ENCODE measurements at regions of chr1 and their contacts with region 1.

Region 1: DNA sequence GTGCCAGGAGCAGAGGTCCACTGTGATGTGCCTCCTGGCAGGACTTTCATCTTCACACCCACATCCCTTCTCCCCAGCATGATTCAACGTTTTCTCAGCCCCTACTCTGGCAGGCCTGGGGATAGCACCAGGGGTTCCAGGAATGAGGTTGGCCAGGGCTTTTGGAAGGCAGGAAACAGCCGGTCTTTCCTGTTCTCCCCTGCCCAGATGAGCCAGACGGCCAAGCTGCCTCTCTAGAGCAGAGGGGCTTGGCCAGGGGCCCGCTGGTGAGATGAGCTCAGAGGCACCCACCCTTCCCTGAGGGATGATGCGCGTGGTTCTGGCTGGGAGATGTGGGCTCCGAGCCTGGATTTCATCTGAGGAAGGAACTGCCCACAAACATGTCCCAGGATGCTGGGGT is 4.3 kb upstream of the MFAP2 start:
- DNase-seq: peak in 1 of 2 experiments; percentile 39
- H3K4me3 ChIP-seq: no peak overlapping the region
- H3K27ac ChIP-seq: no peak overlapping the region
- H3K4me1 ChIP-seq: peaks cover 0 to 9% (median 4%) of the 10 kb centered on the region in 4 experiments; a peak in 5 of 7 replicates
- H3K27me3 ChIP-seq: peaks cover 0 to 3% (median 0%) of the 10 kb centered on the region in 4 experiments; a peak in 1 of 7 replicates
- CTCF ChIP-seq: no peak
- EP300 ChIP-seq: no peak
- POLR2A ChIP-seq: no peak
- RAD21 ChIP-seq: no peak

Region 2: DNA sequence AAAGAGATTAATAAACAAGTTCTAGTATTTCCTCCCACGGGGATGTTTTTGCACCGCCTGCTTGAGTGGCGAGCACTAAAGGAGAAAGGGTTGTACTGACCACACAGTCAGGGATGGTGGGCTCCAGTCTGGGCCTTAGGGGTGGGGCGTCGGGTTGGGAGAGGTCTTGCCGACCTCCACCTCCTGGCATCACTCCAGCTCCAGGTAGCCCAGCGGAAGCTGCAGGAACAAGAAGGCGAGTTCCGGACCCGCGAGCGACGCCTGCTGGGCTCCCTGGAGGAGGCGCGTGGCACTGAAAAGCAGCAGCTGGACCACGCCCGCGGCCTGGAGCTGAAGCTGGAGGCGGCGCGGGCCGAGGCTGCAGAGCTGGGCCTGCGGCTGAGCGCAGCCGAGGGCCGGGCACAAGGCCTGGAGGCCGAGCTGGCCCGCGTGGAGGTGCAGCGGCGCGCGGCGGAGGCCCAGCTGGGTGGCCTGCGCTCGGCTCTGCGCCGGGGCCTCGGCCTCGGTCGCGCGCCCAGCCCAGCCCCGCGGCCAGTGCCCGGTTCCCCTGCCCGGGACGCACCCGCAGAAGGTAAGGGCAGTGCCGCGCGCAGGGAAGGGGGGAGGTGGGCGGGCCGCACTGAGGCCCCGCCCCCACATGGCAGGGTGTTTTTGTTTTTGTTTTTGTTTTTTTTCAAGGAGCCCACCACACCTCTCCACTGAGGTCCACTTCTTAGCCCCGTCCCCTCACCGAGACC is 24.0 kb before region 1 on chr1:
- CTCF ChIA-PET with region 1: interaction called, 267 read pairs
- POLR2A ChIA-PET with region 1: interaction called, 92 read pairs
- DNase-seq: peak; percentile 84 to 97
- H3K4me3 ChIP-seq: peak overlapping the region; percentile 5 to 46 (median 23); a peak in 7 of 8 replicates
- H3K27ac ChIP-seq: no peak overlapping the region
- H3K4me1 ChIP-seq: no peaks in the 10 kb centered on the region
- H3K27me3 ChIP-seq: no peaks in the 10 kb centered on the region
- CTCF ChIP-seq: peak; percentile 80 to 87 (median 84)
- EP300 ChIP-seq: 0 out of 3 replicates have a peak, but pooled peaks of 1 of the 2 experiments have one; percentile 25
- POLR2A ChIP-seq: peak in 1 of 2 experiments; percentile 66; a peak in 2 of 3 replicates
- RAD21 ChIP-seq: peak; percentile 47 to 53

Region 3: GRCh38 chr1:17004466-17005364 is 20.0 kb after region 1 on chr1:
- CTCF ChIA-PET with region 1: interaction called, 164 read pairs
- POLR2A ChIA-PET with region 1: interaction called, 18 read pairs
- DNase-seq: no peak
- H3K4me3 ChIP-seq: no peak overlapping the region
- H3K27ac ChIP-seq: no peak overlapping the region
- H3K4me1 ChIP-seq: peaks cover 0 to 10% (median 7%) of the 10 kb centered on the region in 4 experiments; a peak in 5 of 7 replicates
- H3K27me3 ChIP-seq: no peaks in the 10 kb centered on the region
- CTCF ChIP-seq: peak; percentile 39 to 45 (median 41)
- EP300 ChIP-seq: no peak
- POLR2A ChIP-seq: no peak
- RAD21 ChIP-seq: peak; percentile 16 to 35; a peak in 2 of 4 replicates

Region 4: GRCh38 chr1:17011439-17012307 is 27.0 kb after region 1 on chr1 and contains the start of gene ATP13A2:
- CTCF ChIA-PET with region 1: interaction called, 164 read pairs
- POLR2A ChIA-PET with region 1: interaction called, 18 read pairs
- DNase-seq: peak; percentile 77 to 86
- H3K4me3 ChIP-seq: peak within 1 kb of the TSS; percentile 58 to 94 (median 78)
- H3K27ac ChIP-seq: peak within 1 kb of the TSS; percentile 30; the same call in 1 of the 2 replicates
- H3K4me1 ChIP-seq: peaks cover 24 to 47% (median 34%) of the 10 kb centered on the region in 4 experiments
- H3K27me3 ChIP-seq: no peaks in the 10 kb centered on the region
- CTCF ChIP-seq: no peak
- EP300 ChIP-seq: no peak
- POLR2A ChIP-seq: peak in 1 of 2 experiments; percentile 34; a peak in 1 of 3 replicates
- RAD21 ChIP-seq: no peak
- total RNA-seq, gene ATP13A2: 82.1 and 89.8 TPM in 2 replicates

Region 5: DNA sequence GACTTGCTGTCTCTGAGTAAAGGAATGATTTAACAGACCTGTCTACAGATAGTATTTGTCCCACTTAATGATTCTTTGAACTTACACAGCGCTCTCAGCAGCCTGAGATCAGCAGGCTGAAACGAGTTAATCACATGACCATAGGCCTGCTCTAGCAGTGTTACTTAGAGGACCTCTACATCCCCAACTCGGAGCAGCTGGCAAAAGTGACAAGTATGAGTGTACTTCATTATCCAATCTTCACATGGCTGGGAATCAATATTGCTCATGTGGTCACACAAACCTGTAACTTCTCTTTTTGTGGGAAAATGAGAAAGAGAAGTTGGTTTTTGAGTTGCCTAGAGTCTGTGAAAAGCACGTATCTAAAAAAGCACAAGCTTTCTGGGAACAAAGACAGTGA is 38.4 kb after region 1 on chr1:
- CTCF ChIA-PET with region 1: interaction called, 12 read pairs
- POLR2A ChIA-PET with region 1: interaction called, 3 read pairs
- DNase-seq: no peak
- H3K4me3 ChIP-seq: no peak overlapping the region
- H3K27ac ChIP-seq: no peak overlapping the region
- H3K4me1 ChIP-seq: no peaks in the 10 kb centered on the region
- H3K27me3 ChIP-seq: no peaks in the 10 kb centered on the region
- CTCF ChIP-seq: no peak
- EP300 ChIP-seq: no peak
- POLR2A ChIP-seq: no peak
- RAD21 ChIP-seq: no peak

Region 6: DNA sequence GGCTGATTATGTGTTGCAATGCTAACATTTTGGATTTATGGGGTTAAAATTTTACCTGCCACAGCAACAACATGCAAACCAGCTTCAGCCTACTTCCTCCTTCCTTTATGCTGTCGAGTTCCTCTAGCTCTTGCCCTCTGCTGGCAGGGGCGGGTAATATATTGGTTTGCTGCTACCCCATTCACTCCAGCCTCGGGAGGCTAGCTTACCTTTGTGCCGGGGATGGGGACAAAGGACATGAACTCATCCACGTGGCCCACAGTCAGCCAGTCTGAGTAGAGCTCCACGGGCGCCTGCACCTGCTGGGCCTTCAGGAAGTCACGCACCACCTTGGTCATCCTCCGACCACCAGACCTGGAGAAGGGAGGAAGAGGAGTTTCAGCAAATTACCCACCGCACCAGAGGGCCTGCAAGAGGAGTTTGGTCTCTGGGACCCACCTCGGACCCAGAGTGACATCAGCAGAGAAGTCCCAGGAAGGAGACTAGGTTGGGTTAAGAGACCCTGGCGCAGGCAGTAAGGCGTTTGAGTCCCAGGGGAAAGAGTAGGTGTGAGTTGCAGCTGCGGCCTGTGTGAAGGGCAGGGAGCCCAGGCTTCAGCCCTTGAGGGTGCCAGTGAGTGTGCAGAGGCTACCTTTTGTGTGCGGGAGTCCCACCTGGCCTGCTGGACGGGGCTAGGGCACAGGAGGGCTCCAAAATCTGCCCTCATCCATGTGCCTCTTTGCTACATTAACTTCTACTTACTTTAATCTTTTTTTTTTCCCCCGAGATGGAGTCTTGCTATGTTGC is 90.9 kb after region 1 on chr1:
- CTCF ChIA-PET with region 1: no interaction called
- POLR2A ChIA-PET with region 1: no interaction called
- DNase-seq: peak; percentile 19 to 80
- H3K4me3 ChIP-seq: no peak overlapping the region
- H3K27ac ChIP-seq: no peak overlapping the region
- H3K4me1 ChIP-seq: no peaks in the 10 kb centered on the region
- H3K27me3 ChIP-seq: no peaks in the 10 kb centered on the region
- CTCF ChIP-seq: peak; percentile 51 to 82 (median 64)
- EP300 ChIP-seq: no peak
- POLR2A ChIP-seq: 0 out of 3 replicates have a peak, but pooled peaks of 1 of the 2 experiments have one; percentile 20
- RAD21 ChIP-seq: peak; percentile 34 to 52; a peak in 3 of 4 replicates

Region 7: DNA sequence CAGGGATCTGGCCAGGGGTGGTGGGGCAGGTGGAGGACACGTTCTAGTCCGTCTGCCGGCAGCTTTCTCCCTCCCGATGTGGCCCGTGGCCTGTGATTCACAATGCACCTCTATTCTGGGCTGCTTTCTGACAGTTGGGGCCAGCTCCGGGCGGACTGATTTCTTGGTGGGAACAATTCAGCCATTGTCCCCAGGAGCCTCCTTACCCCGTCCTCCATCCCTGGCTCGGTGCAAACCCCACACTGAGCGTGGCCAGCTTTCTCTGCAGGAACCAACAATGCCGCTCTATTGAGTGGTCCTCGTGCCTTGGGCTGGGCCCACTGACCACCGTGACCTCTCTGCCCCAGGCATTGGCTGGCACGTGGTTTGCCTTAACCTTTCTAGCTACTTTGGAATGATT is 104.8 kb after region 1 on chr1:
- CTCF ChIA-PET with region 1: no interaction called
- POLR2A ChIA-PET with region 1: no interaction called
- DNase-seq: no peak
- H3K4me3 ChIP-seq: no peak overlapping the region
- H3K27ac ChIP-seq: no peak overlapping the region
- H3K4me1 ChIP-seq: no peaks in the 10 kb centered on the region
- H3K27me3 ChIP-seq: no peaks in the 10 kb centered on the region
- CTCF ChIP-seq: no peak
- EP300 ChIP-seq: no peak
- POLR2A ChIP-seq: no peak
- RAD21 ChIP-seq: no peak

Region 8: GRCh38 chr1:17161137-17161740 is 176.5 kb after region 1 on chr1:
- CTCF ChIA-PET with region 1: no interaction called
- POLR2A ChIA-PET with region 1: no interaction called
- DNase-seq: peak in 1 of 2 experiments; percentile 38
- H3K4me3 ChIP-seq: no peak overlapping the region
- H3K27ac ChIP-seq: no peak overlapping the region
- H3K4me1 ChIP-seq: no peaks in the 10 kb centered on the region; a peak in 1 of 7 replicates
- H3K27me3 ChIP-seq: no peaks in the 10 kb centered on the region; a peak in 1 of 7 replicates
- CTCF ChIP-seq: no peak
- EP300 ChIP-seq: no peak
- POLR2A ChIP-seq: no peak
- RAD21 ChIP-seq: no peak